A673 (cell line): ENCODE measurements at regions of chr17 and their contacts with region 1.

Region 1: DNA sequence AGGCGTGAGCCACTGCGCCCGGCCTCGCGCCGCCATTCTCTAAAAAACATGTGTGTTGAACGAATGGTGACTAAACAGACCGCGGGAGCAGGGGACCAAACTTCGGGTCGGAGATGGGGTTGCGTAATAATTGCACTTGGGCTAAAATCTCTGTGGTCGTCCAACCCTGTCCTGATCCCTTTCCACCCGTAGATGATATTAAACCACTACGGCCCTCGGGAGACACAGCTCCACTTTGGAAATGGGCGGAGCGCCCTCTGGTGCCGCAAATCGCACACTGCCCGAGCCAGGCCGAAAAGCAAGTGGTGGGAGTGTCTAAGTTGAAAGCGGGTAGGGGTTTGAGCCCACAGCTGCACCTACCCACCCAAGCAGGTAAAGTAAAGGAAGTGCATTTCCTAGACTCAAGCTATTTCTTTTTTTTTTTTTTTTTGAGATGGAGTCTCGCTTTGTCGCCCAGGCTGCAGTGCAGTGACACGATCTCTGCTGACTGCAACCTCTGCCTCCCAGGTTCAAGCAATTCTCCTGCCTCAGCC is 17.0 kb downstream of the CAVIN1 start:
- DNase-seq: peak; percentile 67
- H3K4me3 ChIP-seq: no peak overlapping the region
- H3K27ac ChIP-seq: no peak overlapping the region
- H3K4me1 ChIP-seq: peaks cover 17% of the 10 kb centered on the region
- H3K27me3 ChIP-seq: no peaks in the 10 kb centered on the region
- CTCF ChIP-seq: peak; percentile 75

Region 2: GRCh38 chr17:42221937-42222745 is 183.9 kb before region 1 on chr17:
- CTCF ChIA-PET with region 1: interaction called, 10 read pairs
- POLR2A ChIA-PET with region 1: no interaction called
- intact Hi-C with region 1: no loop called
- DNase-seq: peak; percentile 35
- H3K4me3 ChIP-seq: no peak overlapping the region
- H3K27ac ChIP-seq: no peak overlapping the region
- H3K4me1 ChIP-seq: no peaks in the 10 kb centered on the region
- H3K27me3 ChIP-seq: no peaks in the 10 kb centered on the region
- CTCF ChIP-seq: peak; percentile 62

Region 3: GRCh38 chr17:42266918-42267778 is 138.9 kb before region 1 on chr17:
- CTCF ChIA-PET with region 1: no interaction called
- POLR2A ChIA-PET with region 1: no interaction called
- intact Hi-C with region 1: no loop called
- DNase-seq: no peak
- H3K4me3 ChIP-seq: no peak overlapping the region
- H3K27ac ChIP-seq: no peak overlapping the region
- H3K4me1 ChIP-seq: no peaks in the 10 kb centered on the region
- H3K27me3 ChIP-seq: no peaks in the 10 kb centered on the region
- CTCF ChIP-seq: no peak

Region 4: GRCh38 chr17:42312285-42313130 is 93.5 kb before region 1 on chr17:
- CTCF ChIA-PET with region 1: interaction called, 10 read pairs
- POLR2A ChIA-PET with region 1: no interaction called
- intact Hi-C with region 1: no loop called
- DNase-seq: peak; percentile 73
- H3K4me3 ChIP-seq: no peak overlapping the region
- H3K27ac ChIP-seq: no peak overlapping the region
- H3K4me1 ChIP-seq: peaks cover 7% of the 10 kb centered on the region
- H3K27me3 ChIP-seq: no peaks in the 10 kb centered on the region
- CTCF ChIP-seq: peak; percentile 59

Region 5: DNA sequence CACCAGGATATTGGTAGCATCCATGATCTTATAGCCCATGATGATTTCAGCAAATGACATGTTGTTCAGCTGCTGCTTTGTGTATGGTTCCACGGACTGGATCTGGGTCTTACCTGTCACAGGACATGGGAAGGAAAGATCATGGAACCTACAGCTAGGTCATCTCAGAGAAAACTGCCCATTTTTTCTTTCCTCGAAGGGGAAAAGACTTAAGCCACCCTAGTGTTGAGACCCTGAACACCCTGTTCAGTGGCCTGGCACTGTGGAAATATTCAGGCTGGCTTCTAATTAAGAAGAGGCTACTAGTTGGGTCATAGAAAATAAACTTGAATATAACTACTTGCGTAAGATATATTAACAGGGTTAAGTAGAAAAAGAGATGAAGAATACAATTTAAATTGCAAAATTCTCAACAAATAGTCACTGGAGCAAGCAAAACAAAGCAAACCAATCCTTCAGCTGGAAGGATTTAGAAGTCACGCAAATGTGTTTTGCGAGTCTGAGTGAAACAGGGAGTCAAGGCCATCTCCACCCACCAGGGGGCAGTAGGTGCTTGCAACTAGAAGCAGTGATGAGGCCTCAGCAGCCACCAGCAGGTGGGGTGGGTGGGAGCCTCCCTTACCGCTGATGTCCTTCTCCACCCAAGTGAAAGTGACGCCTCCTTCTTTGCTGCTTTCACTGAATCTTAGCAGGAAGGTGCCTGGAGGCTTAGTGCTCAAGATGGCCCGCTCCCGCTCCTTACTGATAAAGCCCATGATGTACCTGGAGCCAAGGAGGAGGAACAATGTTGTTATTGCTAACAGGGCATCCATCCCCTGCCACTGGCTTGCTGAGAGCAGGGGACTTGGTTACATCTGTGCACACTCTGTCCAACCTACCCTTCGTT is 83.4 kb before region 1 on chr17:
- CTCF ChIA-PET with region 1: interaction called, 8 read pairs
- POLR2A ChIA-PET with region 1: no interaction called
- intact Hi-C with region 1: loop called (anchors 2 kb)
- DNase-seq: peak; percentile 86
- H3K4me3 ChIP-seq: no peak overlapping the region
- H3K27ac ChIP-seq: no peak overlapping the region
- H3K4me1 ChIP-seq: no peaks in the 10 kb centered on the region
- H3K27me3 ChIP-seq: no peaks in the 10 kb centered on the region
- CTCF ChIP-seq: peak; percentile 83

Region 6: GRCh38 chr17:42517516-42517915 is 111.5 kb after region 1 on chr17:
- CTCF ChIA-PET with region 1: no interaction called
- POLR2A ChIA-PET with region 1: no interaction called
- intact Hi-C with region 1: loop called (anchors 5 kb)
- DNase-seq: peak; percentile 72
- H3K4me3 ChIP-seq: no peak overlapping the region
- H3K27ac ChIP-seq: no peak overlapping the region
- H3K4me1 ChIP-seq: peaks cover 29% of the 10 kb centered on the region
- H3K27me3 ChIP-seq: no peaks in the 10 kb centered on the region
- CTCF ChIP-seq: peak; percentile 87